Activated naive CD4-positive, alpha-beta T cell treated with anti-CD3 and anti-CD28 coated beads, Interleukin-2, amount 10 ng/mL, durations not matched to agents 7 days and 5 days (primary cell): ENCODE measurements at regions of chr2 and their contacts with region 1.

Region 1: DNA sequence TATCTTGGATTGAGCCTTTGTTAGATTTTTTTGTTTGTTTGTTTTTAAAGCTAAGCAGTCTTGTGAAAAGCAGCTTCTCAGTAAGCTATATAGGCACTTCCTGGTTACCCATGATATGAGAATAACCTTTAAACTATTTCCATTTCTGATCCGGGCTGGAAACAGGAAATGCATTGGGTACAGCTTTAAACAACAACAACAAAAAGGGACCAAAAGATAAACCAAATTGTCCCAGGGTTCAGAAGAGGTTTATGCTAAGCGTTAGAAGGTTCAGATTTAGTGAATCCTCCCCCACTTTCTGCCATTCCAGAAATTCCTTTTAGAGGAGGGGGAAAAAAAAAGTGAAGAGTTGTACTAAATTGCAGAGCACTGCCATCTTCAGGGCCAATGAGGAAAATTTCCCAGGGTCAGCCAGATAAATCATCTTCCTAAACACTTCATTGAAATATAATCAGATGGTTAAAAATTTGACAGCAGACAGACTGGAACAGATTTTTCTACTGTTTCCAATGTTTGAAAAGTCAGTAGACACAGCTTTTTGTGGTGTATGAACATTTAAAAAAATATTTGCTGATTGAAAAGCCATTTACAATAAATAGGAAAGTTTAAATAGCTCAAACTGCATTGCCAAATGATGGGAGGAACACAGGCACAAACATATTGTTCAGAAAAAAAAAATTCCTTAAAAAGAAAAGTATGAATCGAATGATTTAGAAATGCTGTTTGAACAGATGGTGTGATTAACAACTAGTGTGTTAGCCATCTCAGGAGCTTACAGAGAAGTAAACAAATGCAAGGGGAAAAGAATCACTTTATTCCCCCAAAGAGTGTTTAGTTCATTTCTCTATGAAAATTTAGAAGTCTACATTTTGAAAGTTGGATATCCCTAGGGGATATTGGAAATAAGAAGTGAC is 189.9 kb upstream of the TANK start:
- DNase-seq: no peak
- H3K4me3 Mint-ChIP-seq: no peak overlapping the region
- H3K27ac Mint-ChIP-seq: no peak overlapping the region
- H3K4me1 Mint-ChIP-seq: peaks cover 3% of the 10 kb centered on the region
- H3K27me3 Mint-ChIP-seq: peaks cover 13% of the 10 kb centered on the region

Region 2: DNA sequence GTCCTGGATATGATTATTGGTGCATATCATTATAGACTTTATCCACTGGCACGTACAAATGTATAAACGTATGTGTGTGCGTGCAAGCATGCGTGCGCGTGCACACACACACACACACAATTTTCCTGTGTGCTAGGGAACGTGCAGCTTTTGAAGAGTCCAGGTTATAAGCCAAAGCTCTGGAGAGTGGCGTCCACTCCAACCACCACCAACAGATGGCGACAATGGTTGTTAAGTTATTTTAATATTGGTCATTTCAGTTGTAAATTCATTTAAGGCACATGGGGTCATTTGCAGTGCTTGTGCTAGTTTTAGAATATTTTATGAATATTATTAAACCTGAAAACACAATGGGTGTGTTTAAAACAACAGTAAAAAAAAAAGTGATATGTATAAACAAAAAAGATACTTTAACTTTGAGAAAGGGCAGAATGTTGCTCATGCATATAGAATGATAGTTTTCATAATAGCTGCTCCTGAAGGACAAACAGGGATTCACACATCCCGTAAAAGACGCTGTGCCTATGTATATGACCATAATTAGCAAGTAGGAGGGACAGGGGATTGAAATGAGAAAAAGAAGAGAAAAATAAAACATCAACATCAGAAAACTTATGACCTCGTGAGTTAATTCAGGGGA is 646.0 kb before region 1 on chr2:
- CTCF ChIA-PET with region 1: interaction called, 23 read pairs
- DNase-seq: peak; percentile 53
- H3K4me3 Mint-ChIP-seq: no peak overlapping the region
- H3K27ac Mint-ChIP-seq: no peak overlapping the region
- H3K4me1 Mint-ChIP-seq: peaks cover 77% of the 10 kb centered on the region
- H3K27me3 Mint-ChIP-seq: no peaks in the 10 kb centered on the region